AG04450 (cell line): ENCODE measurements at regions of chr11 and their contacts with region 1.

Region 1: DNA sequence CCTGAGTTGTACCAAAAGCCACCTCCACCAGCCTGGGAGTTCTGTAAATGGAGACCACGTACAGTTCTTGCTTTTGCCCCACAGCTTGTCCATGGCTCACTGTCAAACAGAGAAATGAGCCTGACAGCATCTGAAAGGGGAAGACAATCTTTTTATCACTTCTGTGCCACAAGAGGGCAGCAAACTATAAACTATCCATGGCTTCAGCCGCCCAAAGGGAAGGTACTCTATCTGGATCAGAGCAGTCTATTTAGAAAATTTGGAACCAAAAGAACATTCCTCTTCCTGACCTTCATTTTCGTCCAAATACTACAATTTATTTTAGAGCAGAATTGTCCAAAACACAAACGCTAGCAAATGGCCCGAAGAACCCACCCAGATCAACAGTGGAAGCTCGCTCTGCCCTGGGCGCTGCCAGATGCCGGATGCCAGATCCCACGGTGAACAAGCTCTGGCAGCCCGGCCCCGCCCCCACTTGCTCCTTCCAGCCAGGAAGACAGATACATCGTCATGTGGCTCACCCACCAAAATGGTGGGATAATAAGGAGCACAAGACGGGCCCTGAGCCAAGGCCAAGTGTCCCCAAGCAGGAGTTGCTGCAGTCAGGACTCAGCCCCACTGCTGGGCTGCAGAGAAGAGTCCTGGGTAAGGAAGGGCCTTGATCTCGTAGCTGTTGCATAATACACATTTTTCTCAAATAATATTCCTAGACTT is 23.9 kb upstream of the SCGB1A1 start:
- DNase-seq: peak; percentile 68
- H3K4me3 ChIP-seq: peak overlapping the region; percentile 53
- H3K27ac ChIP-seq: no peak overlapping the region
- H3K27me3 ChIP-seq: peaks cover 4% of the 10 kb centered on the region
- CTCF ChIP-seq: peak; percentile 67

Region 2: DNA sequence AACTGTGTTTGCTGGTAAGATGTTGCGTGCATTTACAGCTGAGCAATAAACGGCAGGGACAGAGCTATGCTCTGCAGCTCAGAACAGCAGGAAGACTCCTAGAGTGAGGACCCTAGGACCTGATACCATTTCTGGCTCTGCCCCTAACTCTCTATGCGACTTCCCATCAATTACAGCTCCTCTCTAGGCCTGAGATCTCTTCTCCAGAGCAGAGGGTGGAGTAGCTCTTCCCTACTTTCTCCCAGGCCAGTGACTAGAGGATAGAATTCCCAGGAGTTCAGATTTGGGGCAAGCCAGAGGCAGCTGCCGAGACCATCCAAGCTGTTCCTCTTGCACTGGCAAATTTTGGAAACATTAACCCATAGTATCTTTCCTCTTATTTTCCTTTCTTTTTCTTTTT is 11.1 kb after region 1 on chr11:
- CTCF ChIA-PET with region 1: interaction called, 14 read pairs
- POLR2A ChIA-PET with region 1: no interaction called
- DNase-seq: no peak
- H3K4me3 ChIP-seq: no peak overlapping the region
- H3K27ac ChIP-seq: no peak overlapping the region
- H3K27me3 ChIP-seq: peaks cover 10% of the 10 kb centered on the region
- CTCF ChIP-seq: no peak

Region 3: DNA sequence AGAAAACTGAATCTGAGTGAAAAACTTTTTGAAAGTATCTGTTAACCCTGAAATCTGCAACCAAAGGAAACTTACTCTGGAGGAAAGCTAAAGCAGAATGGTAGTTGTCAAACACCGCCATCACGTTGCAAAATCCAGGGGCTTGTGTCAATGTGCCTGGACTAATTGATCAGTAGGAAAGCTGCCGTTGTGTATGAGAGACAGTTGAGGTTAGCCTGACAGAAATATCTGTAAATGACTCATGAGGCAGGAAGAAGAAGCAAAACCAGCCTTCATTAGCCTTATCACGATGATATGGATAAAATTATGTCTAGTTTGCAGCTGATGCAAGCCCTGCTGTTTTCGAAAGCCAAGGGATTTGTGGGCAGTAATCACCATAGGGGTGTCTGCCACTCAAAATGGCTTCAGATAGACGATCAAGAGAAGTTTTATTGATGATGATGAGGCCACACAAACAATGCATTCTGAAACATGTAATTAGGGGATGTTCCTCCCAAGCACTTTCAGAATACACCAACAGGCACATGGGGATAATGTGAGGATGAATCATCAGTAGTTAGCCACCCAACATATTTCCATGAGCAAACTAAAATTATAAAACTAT is 32.8 kb after region 1 on chr11:
- CTCF ChIA-PET with region 1: interaction called, 39 read pairs
- POLR2A ChIA-PET with region 1: no interaction called
- DNase-seq: no peak
- H3K4me3 ChIP-seq: no peak overlapping the region
- H3K27ac ChIP-seq: peak overlapping the region; percentile 80
- H3K27me3 ChIP-seq: no peaks in the 10 kb centered on the region
- CTCF ChIP-seq: no peak

Region 4: GRCh38 chr11:62449451-62449851 is 54.5 kb after region 1 on chr11:
- CTCF ChIA-PET with region 1: no interaction called
- POLR2A ChIA-PET with region 1: no interaction called
- DNase-seq: no peak
- H3K4me3 ChIP-seq: no peak overlapping the region
- H3K27ac ChIP-seq: no peak overlapping the region
- H3K27me3 ChIP-seq: no peaks in the 10 kb centered on the region
- CTCF ChIP-seq: no peak

Region 5: GRCh38 chr11:62556108-62556871 is 161.3 kb after region 1 on chr11:
- CTCF ChIA-PET with region 1: interaction called, 120 read pairs
- POLR2A ChIA-PET with region 1: interaction called, 9 read pairs
- DNase-seq: peak; percentile 86
- H3K4me3 ChIP-seq: peak overlapping the region; percentile 27
- H3K27ac ChIP-seq: peak overlapping the region; percentile 87
- H3K27me3 ChIP-seq: no peaks in the 10 kb centered on the region
- CTCF ChIP-seq: no peak

Region 6: GRCh38 chr11:62591448-62592145 is 196.6 kb after region 1 on chr11 and contains the start of gene TUT1:
- CTCF ChIA-PET with region 1: interaction called, 12 read pairs
- POLR2A ChIA-PET with region 1: interaction called, 3 read pairs
- DNase-seq: peak; percentile 97
- H3K4me3 ChIP-seq: peak within 1 kb of the TSS; percentile 68
- H3K27ac ChIP-seq: peak within 1 kb of the TSS; percentile 87
- H3K27me3 ChIP-seq: no peaks in the 10 kb centered on the region
- CTCF ChIP-seq: no peak
- polyA plus RNA-seq, gene TUT1: 7.8 and 9.0 TPM in 2 replicates

Region 7: GRCh38 chr11:62694455-62695167 is 299.6 kb after region 1 on chr11:
- CTCF ChIA-PET with region 1: interaction called, 14 read pairs
- POLR2A ChIA-PET with region 1: no interaction called
- DNase-seq: peak; percentile 55
- H3K4me3 ChIP-seq: no peak overlapping the region
- H3K27ac ChIP-seq: no peak overlapping the region
- H3K27me3 ChIP-seq: no peaks in the 10 kb centered on the region
- CTCF ChIP-seq: peak; percentile 90